ENCODE measurements at regions of chr17 and their contacts with region 1.

Region 1: DNA sequence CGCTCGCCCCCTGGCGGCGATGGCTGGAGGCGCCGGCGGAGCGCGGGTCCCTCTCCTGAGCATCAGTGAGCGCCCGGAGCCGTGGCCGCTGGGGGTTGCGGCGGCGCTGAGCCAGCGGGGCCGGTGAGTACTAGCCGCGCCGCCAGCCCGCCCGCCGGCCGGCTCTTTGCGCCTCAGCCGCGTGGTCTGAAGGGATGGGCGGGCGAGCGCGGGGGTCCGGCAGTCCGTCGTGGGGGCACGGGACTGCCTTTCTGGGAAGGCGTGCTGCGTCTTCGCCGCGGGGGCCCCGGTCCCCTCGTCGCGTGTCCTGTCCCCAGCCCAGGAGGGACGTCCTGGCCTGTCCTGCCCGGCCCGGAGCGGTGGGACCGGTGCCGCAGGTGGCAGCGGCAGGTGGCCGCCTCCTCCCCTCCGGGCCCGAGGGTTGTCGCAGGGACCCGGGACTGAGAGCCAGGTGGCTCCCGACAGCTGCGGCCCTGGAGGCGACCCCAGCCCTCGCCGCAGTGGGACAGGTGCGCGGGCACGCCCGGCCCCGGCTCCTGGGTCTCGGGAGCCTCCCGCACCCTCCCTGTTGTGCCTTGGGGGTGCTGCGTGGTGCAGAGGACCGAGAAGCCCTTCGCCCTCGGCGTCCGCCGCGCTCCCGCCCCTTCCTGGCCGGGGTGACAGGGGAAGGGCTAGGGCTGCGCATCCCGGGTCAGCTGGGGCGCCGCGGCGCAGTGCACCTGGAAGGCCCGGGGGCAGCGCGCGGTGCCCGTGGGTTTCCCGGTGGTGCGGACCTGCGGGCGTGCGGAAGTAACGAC is at the start of gene SPECC1:
- DNase-seq: peak; percentile 2 to 78 (median 76)
- H3K4me3 ChIP-seq: peak within 1 kb of the TSS; percentile 80 to 85 (median 83)
- H3K4me3 Mint-ChIP-seq: peak within 1 kb of the TSS; percentile 89 to 96
- H3K27ac ChIP-seq: no peak within 1 kb of the TSS
- H3K27ac Mint-ChIP-seq: peak within 1 kb of the TSS in 4 of 7 donors; percentile 21 to 71 (median 59)
- H3K4me1 ChIP-seq: peaks cover 12 to 21% of the 10 kb centered on the region in 2 donors
- H3K4me1 Mint-ChIP-seq: peaks cover 13% of the 10 kb centered on the region
- H3K27me3 ChIP-seq: peaks cover 6 to 30% of the 10 kb centered on the region in 2 donors
- H3K27me3 Mint-ChIP-seq: peaks cover 32 to 42% (median 32%) of the 10 kb centered on the region in 3 donors
- CTCF ChIP-seq: peak; percentile 99
- polyA plus RNA-seq, gene SPECC1: 36.0 to 58.4 (median 50.5) TPM

Region 2: DNA sequence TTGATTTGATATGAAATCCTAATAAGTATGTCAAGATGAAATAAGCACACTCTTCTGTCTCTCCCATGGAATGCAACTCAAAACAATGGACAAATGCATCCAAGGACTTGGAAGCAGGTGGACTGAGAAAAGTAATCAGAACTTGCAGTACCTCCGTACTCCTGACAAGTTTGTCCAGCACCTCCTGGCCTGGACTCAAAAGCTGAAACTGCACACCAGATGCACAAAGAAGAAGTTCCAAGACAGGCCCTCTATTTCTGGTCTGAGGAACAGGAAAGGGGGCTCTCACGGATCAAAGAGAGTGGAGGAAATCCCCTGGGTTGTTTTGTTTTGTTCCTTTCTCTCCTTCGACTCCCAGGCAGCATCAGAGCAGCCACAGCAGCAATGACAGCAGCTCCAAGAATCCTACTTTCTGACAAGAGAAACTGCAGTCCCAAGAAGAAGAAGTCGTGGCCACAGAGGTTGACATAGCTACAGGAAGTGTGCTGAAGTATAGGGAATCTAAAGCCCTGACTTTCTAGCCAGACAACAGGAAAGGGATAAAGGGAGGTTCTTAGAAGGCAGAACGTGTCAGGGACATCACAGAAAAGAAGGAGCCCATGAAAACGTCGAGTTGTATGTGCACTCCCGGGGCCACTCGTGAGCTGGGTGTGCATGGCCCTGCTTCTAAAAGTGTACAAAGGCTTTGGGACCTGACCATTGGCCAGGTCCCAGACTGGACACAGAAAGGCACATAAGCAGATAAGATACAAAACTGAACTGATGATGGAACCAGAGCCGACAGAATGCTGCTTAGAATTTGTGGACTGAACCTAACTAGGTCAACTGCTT is 61.2 kb before region 1 on chr17:
- intact Hi-C with region 1: no loop called
- DNase-seq: no peak
- H3K4me3 ChIP-seq: no peak overlapping the region
- H3K4me3 Mint-ChIP-seq: no peak overlapping the region
- H3K27ac ChIP-seq: peak overlapping the region in 1 of 2 donors; percentile 72
- H3K27ac Mint-ChIP-seq: peak overlapping the region; percentile 26 to 87 (median 73)
- H3K4me1 ChIP-seq: peaks cover 0 to 4% of the 10 kb centered on the region in 2 donors
- H3K4me1 Mint-ChIP-seq: peaks cover 18% of the 10 kb centered on the region
- H3K27me3 ChIP-seq: no peaks in the 10 kb centered on the region
- H3K27me3 Mint-ChIP-seq: no peaks in the 10 kb centered on the region
- CTCF ChIP-seq: no peak

Region 3: DNA sequence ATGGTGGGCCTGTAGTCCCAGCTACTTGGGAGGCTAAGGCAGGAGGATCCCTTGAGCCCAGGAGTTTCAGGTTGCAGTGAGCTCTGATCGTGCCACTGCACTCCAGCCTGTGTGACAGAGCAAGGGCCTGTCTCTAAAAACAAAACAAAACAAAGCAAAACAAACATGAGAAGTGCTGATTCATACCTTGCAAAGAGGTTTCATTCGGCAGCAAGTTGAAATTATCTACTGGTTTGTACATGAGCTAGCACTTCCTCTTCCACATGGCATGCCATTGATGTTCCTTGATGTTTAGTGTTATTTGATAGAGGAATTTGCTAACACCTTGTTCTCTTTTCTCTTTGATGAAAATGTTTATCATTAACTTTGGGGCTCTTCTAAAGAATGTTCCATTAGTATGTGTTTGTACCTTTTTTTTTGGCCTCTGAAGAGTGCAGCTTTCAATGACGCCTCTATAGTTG is 50.3 kb after region 1 on chr17:
- intact Hi-C with region 1: no loop called
- DNase-seq: peak; percentile 54 to 77 (median 64)
- H3K4me3 ChIP-seq: peak overlapping the region in 1 of 3 experiments; percentile 29
- H3K4me3 Mint-ChIP-seq: peak overlapping the region in 1 of 2 donors; percentile 56
- H3K27ac ChIP-seq: peak overlapping the region; percentile 26 to 74
- H3K27ac Mint-ChIP-seq: peak overlapping the region; percentile 74 to 92 (median 86)
- H3K4me1 ChIP-seq: peaks cover 37 to 41% of the 10 kb centered on the region in 2 donors
- H3K4me1 Mint-ChIP-seq: peaks cover 40% of the 10 kb centered on the region
- H3K27me3 ChIP-seq: no peaks in the 10 kb centered on the region
- H3K27me3 Mint-ChIP-seq: peaks cover 0 to 2% (median 0%) of the 10 kb centered on the region in 3 donors
- CTCF ChIP-seq: no peak

Region 4: DNA sequence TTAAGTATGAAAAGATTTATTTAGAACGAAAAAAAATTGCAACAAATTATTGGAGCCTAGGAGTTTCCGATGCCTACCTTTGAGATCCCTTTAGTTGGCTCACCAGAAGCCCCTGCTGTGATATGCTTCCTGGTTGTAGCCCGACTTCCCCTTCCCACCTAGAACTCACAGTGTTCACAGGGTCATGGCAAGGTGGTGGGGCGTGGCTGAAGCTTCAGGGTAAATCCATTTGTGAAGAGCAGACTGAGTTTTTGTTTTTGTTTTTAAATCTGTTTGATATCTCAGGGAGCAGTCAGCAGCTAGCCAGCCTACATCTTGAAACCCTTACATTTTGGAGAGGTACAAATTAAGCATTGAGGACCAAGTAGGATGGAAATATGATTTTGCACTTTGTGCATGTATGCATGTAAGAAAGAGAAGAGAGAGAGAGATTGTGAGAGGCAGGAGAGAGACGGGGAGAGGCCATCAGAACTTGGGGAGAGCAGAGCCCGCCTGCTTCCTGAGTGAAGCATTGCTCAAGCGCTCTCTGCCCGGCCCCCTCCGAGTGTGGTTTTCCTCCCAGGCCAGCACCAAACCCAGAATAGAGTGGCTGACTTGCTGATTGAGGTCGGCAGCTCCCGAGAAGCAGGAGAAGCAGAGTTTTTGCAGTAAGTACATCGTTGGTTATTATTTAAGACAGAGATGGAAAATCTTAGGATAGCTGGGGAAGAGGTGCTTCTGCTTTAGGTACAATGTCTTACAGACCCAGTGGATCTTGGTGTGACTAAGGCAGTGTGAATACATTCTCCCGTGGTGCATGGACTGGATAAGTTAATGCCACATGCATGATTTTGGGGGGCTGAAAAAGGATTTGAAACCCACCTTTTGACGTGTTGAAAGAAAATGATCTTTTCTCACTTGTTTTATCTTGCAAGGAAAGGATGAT is 63.8 kb after region 1 on chr17:
- intact Hi-C with region 1: loop called in 1 of 2 experiments (anchors 5 kb)
- DNase-seq: peak; percentile 61 to 74 (median 66)
- H3K4me3 ChIP-seq: peak overlapping the region; percentile 58 to 100 (median 96)
- H3K4me3 Mint-ChIP-seq: peak overlapping the region; percentile 89 to 94
- H3K27ac ChIP-seq: peak overlapping the region; percentile 72 to 85
- H3K27ac Mint-ChIP-seq: peak overlapping the region; percentile 91 to 96 (median 94)
- H3K4me1 ChIP-seq: peaks cover 58 to 78% of the 10 kb centered on the region in 2 donors
- H3K4me1 Mint-ChIP-seq: peaks cover 86% of the 10 kb centered on the region
- H3K27me3 ChIP-seq: no peaks in the 10 kb centered on the region
- H3K27me3 Mint-ChIP-seq: no peaks in the 10 kb centered on the region
- CTCF ChIP-seq: no peak